Activated naive CD4-positive, alpha-beta T cell treated with anti-CD3 and anti-CD28 coated beads for 36 hours (primary cell): ENCODE measurements at regions of chr7 and their contacts with region 1.

Region 1: DNA sequence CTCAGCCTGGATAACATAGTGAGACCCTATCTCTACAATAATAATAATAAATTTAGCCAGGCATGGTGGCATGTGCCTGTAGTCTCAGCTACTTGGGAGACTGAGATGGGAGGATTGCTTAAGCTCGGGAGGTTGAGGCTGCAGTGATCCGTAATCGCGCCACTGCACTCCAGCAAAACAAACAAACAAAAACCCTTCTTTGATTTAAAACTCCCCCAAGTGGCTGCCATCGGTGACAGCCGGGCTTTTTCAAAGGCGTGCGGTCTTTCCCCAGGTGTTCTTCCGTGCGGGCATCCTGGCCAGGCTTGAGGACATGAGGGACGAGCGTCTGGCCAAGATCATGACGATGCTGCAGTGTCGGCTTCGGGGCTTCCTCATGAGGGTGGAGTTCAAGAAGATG is 2.0 kb upstream of the MYH16 start:
- DNase-seq: no peak
- H3K4me3 Mint-ChIP-seq: no peak overlapping the region
- H3K27ac Mint-ChIP-seq: no peak overlapping the region
- H3K4me1 Mint-ChIP-seq: peaks cover 15% of the 10 kb centered on the region
- H3K27me3 Mint-ChIP-seq: peaks cover 3% of the 10 kb centered on the region

Region 2: GRCh38 chr7:98470485-98471240 is 800.0 kb before region 1 on chr7:
- CTCF ChIA-PET with region 1: no interaction called
- intact Hi-C with region 1: no loop called
- DNase-seq: peak; percentile 12
- H3K4me3 Mint-ChIP-seq: no peak overlapping the region
- H3K27ac Mint-ChIP-seq: no peak overlapping the region
- H3K4me1 Mint-ChIP-seq: peaks cover 4% of the 10 kb centered on the region
- H3K27me3 Mint-ChIP-seq: peaks cover 28% of the 10 kb centered on the region

Region 3: DNA sequence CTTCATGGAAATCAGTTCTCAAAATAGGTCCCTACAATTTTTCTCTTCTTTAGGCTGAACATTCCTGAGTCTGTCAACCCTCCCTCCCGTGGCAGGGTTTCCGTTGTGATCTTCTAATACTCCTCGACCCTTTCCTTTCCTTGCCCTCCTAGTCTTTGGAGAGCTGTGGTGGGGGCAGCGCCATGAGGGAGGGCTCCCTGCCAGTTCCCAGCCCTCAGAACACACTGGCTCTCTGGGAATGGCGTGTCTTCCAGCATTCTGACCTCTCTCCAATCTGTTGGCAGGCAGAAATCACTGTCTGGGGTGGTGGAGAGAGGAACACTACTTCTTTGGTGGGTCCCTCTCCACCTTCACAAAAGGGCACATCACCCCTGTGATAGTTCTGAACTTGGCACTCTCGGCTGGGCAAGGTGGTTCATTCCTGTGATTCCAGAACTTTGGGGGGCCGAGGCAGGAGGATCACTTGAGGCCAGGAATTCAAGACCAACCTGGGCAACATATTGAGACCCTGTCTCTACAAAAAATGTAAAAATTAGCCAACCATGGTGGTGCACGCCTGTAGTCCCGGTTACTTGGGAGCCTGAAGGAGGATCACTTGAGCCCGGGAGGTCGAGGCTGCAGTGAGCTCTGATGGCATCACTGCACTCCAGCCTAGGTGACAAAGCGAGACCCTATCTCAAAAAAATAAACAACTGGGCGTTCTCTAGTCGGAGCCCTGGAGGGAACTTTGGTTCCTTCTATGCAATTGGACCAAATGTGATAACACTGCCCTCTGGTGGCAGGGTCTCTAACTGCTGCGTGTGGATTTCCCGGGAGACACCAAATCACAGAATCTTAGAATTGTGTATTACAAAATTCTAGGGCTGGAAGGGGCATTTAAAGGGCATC is 41.9 kb after region 1 on chr7:
- CTCF ChIA-PET with region 1: interaction called, 4 read pairs
- intact Hi-C with region 1: loop called (anchors 1 kb)
- DNase-seq: peak; percentile 86
- H3K4me3 Mint-ChIP-seq: no peak overlapping the region
- H3K27ac Mint-ChIP-seq: no peak overlapping the region
- H3K4me1 Mint-ChIP-seq: peaks cover 12% of the 10 kb centered on the region
- H3K27me3 Mint-ChIP-seq: no peaks in the 10 kb centered on the region

Region 4: DNA sequence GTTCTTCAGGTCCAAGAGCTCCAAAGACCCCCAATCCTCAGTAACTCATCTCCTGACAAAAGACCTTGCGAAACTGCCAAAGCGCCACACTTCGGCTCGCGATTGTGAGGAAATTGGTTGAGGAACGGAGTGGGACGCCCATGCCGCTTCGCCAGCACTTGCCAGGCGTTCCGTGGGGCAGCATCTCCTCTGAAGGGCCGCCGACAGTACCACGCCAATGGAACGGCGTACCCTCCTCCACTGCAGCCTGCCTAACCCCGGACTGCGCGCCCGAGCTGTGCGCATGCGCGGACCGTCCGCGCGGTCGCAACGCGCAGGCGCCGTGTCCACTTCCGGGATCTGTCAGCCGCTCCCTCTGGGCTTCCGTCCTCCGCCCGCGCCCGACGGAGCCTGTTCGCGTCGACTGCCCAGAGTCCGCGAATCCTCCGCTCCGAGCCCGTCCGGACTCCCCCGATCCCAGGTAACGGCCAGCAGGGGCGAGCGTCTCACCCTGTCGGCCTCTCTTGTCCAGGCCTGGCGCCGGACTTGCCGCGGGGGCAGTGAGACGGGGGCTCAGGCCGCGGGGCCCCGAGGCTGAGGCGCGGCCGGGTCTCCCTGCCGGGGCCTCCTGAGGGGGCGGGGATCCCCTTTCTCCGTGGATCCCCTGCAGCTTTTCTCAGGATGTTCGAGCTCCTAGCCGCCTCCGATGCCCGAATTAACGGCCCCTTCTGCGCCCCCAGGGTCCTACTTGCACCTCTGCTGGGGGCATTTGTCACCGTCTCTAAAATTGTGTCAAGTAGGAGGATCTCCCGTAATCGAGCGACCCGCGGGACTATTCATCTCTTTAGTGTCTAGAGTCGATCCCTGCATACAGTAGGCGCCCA is 55.1 kb after region 1 on chr7 and contains the start of gene ARPC1A:
- CTCF ChIA-PET with region 1: interaction called, 3 read pairs
- intact Hi-C with region 1: loop called (anchors 5 kb)
- DNase-seq: peak; percentile 90
- H3K4me3 Mint-ChIP-seq: peak within 1 kb of the TSS; percentile 80
- H3K27ac Mint-ChIP-seq: peak within 1 kb of the TSS; percentile 88
- H3K4me1 Mint-ChIP-seq: peaks cover 41% of the 10 kb centered on the region
- H3K27me3 Mint-ChIP-seq: no peaks in the 10 kb centered on the region
- total RNA-seq, gene ARPC1A: 41.5 to 47.7 TPM

Region 5: DNA sequence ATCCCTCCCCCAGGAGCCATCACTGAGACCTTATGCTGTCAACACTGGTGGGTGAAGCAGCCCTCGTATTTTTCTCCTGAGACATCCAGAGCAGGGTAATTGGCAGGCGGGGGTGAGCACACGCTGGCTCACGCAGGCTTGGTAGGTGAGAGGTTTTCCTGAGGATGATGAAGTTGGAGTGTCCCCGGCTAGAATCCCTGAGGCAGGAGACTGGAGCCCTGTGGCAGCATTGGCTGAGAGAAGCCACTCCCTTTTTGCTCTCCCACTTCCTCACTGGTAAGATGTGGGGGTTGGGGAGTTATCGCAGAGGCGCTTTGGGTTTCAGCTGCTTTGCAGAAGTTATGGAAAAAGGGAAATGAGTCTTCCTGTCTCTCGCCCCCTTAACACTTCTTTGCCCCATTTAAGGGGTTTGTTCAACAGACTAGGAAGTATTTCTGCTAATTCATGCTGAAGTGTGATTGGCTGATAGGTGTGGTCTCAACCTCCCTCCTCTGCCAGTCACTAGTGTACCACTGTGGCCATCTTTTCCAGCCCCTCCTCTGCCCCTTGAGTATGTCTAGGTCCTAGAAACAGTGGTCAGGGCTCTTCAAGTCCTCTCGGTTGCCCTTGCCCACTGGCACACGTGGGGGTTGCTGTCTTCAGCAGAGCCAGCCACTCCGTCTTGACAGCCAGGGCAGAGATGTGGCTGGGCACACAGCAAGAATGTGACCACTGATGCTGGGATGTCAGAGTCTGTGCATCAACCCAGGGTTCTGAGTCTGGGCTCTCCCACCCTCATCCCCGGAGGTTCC is 109.5 kb after region 1 on chr7:
- CTCF ChIA-PET with region 1: no interaction called
- intact Hi-C with region 1: loop called (anchors 2 kb)
- DNase-seq: peak; percentile 69
- H3K4me3 Mint-ChIP-seq: peak overlapping the region; percentile 81
- H3K27ac Mint-ChIP-seq: peak overlapping the region; percentile 97
- H3K4me1 Mint-ChIP-seq: peaks cover 61% of the 10 kb centered on the region
- H3K27me3 Mint-ChIP-seq: no peaks in the 10 kb centered on the region

Region 6: GRCh38 chr7:99386584-99387238 is 116.0 kb after region 1 on chr7:
- CTCF ChIA-PET with region 1: no interaction called
- intact Hi-C with region 1: loop called (anchors 1 kb)
- DNase-seq: peak; percentile 54
- H3K4me3 Mint-ChIP-seq: no peak overlapping the region
- H3K27ac Mint-ChIP-seq: no peak overlapping the region
- H3K4me1 Mint-ChIP-seq: peaks cover 19% of the 10 kb centered on the region
- H3K27me3 Mint-ChIP-seq: no peaks in the 10 kb centered on the region

Region 7: DNA sequence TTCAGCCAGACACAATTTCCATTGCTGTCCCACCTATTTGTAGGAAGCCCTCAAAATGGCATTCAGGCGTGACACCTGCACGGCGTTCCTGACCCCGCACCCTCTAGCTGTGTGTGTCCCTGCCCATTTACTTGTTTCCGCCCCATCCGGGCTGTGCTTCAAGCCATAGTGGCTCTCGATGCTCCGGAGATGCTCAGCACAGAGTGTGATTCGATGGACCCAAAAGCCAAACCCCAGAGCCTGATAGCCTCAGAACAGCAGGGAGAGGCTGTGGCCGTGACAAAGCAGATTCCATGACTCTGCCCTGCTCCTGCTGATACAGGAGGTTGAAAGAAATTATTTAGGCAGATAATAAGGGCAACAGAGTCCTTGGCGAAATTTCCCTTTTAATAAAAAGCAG is 151.5 kb after region 1 on chr7:
- CTCF ChIA-PET with region 1: no interaction called
- intact Hi-C with region 1: no loop called
- DNase-seq: no peak
- H3K4me3 Mint-ChIP-seq: no peak overlapping the region
- H3K27ac Mint-ChIP-seq: no peak overlapping the region
- H3K4me1 Mint-ChIP-seq: peaks cover 2% of the 10 kb centered on the region
- H3K27me3 Mint-ChIP-seq: no peaks in the 10 kb centered on the region